Activated CD8-positive, alpha-beta T cell treated with anti-CD3 and anti-CD28 coated beads, Interleukin-2, amount 10 ng/mL, durations not matched to agents 7 days and 5 days (primary cell): ENCODE measurements at regions of chr15 and their contacts with region 1.

Region 1: GRCh38 chr15:81274931-81275707 is 48.8 kb downstream of the STARD5 start:
- DNase-seq: peak; percentile 86
- ATAC-seq: peak; percentile 96
- H3K4me3 Mint-ChIP-seq: no peak overlapping the region
- H3K27ac Mint-ChIP-seq: peak overlapping the region; percentile 60
- H3K4me1 Mint-ChIP-seq: peaks cover 32% of the 10 kb centered on the region
- H3K27me3 Mint-ChIP-seq: no peaks in the 10 kb centered on the region

Region 2: GRCh38 chr15:80977627-80978036 is 297.5 kb before region 1 on chr15:
- CTCF ChIA-PET with region 1: no interaction called
- POLR2A ChIA-PET with region 1: no interaction called
- DNase-seq: peak; percentile 48
- ATAC-seq: peak; percentile 55
- H3K4me3 Mint-ChIP-seq: no peak overlapping the region
- H3K27ac Mint-ChIP-seq: peak overlapping the region; percentile 33
- H3K4me1 Mint-ChIP-seq: peaks cover 43% of the 10 kb centered on the region
- H3K27me3 Mint-ChIP-seq: no peaks in the 10 kb centered on the region

Region 3: DNA sequence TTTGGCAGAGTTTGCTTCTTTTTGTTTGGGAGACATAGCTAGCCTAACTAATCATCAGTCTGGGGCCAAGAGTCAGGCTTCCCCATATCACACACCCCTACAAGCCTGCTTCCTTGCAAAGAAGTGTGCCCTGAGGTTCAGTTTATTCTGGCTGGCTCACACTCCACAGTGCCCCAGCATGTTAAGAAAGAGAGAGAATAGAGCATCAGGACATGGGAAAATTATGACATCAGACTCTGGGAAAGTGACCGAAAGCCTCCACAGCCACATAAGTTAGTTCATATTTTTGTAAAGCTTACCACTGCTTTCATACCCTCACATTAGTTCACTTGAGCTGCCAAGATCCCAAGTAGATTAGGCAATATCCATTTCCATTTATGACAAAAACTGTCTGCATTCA is 204.0 kb before region 1 on chr15:
- CTCF ChIA-PET with region 1: no interaction called
- POLR2A ChIA-PET with region 1: no interaction called
- DNase-seq: no peak
- ATAC-seq: no peak
- H3K4me3 Mint-ChIP-seq: no peak overlapping the region
- H3K27ac Mint-ChIP-seq: no peak overlapping the region
- H3K4me1 Mint-ChIP-seq: peaks cover 14% of the 10 kb centered on the region
- H3K27me3 Mint-ChIP-seq: no peaks in the 10 kb centered on the region

Region 4: DNA sequence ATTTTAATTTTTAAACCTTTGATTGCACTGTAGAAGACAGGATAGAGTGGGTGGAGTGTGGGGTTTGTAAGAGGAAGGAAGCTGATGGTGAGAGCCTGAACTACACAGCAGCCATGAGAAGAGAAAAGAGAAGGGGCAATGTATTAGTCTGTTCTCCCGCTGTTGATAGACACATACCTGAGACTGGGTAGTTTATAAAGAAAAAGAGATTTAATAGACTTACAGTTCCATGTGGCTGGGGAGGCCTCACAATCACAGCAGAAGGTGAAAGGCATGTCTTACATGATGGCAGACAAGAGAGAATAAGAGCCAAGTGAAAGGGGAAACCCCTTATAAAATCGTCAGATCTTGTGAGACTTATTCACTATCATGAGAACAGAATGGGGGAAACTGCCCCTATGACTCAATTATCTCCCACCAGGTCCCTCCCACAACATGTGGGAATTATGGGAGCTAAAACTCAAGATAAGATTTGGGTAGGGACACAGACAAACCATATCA is 11.6 kb after region 1 on chr15:
- CTCF ChIA-PET with region 1: interaction called, 243 read pairs
- POLR2A ChIA-PET with region 1: interaction called, 16 read pairs
- DNase-seq: no peak
- ATAC-seq: peak; percentile 77
- H3K4me3 Mint-ChIP-seq: peak overlapping the region; percentile 63
- H3K27ac Mint-ChIP-seq: peak overlapping the region; percentile 89
- H3K4me1 Mint-ChIP-seq: peaks cover 65% of the 10 kb centered on the region
- H3K27me3 Mint-ChIP-seq: no peaks in the 10 kb centered on the region

Region 5: DNA sequence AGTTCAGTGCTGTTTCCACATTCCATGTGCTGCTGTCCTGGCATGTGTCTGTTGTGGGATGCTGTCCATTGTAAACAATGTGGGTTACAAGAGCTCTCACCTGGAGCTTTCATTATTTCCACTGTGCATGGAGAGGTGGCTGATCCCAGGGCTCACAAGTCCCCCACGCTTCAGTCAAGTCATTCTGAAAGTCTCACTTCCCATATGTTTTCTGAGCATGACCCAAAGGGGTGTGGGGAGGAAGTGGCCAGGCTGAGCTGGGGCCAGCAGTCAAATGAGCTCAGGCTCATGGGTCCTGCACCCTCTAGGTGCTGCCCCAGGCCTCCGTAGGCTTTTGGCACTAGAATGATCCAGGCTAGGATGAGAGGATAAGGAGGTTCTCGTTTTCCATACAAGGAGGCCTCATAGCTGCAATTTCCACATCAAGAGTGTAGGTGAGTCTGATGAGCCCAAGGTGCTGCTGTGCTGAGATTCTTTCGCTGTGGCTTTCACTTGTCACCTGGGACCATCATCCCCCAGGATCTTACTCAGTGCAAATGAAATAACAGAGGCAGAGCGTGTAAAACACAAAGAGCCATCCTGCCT is 26.8 kb after region 1 on chr15:
- CTCF ChIA-PET with region 1: interaction called, 243 read pairs
- POLR2A ChIA-PET with region 1: interaction called, 21 read pairs
- DNase-seq: peak; percentile 66
- ATAC-seq: peak; percentile 42
- H3K4me3 Mint-ChIP-seq: peak overlapping the region; percentile 99
- H3K27ac Mint-ChIP-seq: peak overlapping the region; percentile 93
- H3K4me1 Mint-ChIP-seq: peaks cover 51% of the 10 kb centered on the region
- H3K27me3 Mint-ChIP-seq: no peaks in the 10 kb centered on the region

Region 6: DNA sequence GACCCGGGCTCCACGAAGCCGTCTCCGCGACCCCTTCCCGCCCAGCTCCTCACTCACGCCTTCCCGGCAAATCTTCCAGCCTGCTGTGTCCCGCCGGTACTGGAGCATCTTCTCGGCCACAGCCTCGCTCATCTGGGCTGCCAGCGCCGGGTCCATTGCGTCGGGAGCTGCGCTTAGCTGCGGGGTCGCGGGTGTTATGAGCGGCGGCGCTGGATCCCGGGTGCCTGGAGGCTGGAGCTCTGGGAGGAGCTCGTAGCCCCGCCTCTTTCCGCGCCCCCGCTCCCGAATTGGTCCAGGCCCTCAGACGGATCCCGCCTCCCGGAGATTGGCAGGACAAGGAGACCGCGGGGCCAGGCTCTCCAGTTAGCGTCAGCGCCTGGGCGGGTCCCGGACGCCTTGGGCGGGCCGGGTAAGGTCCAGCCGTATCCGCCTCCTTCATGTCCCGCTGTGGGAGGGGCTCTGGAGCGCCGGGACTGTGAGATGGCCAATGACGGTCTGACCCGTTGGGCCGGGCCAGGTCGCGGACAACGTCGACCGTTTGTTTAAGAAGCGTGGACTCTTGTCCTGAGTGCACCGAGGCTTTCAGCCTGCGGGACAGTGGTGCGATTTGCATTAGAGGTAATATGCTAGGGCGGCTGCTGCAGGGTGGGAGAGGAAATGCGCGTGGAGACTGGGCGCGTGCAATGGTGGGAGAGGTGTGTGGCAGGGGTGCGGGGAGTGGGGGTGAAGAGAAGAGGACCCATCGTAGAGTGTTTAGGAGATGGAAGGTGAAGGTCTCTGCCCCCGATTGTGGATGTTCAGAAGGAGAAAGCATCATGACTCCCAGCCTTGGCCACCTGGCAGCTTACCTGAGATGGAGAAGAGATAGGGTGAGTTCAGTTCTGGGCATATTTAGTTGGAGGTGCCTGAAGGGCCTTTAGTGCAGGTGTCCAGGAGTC is 49.1 kb after region 1 on chr15 and contains the start of gene STARD5:
- CTCF ChIA-PET with region 1: interaction called, 11 read pairs
- POLR2A ChIA-PET with region 1: interaction called, 4 read pairs
- DNase-seq: peak; percentile 98
- ATAC-seq: peak; percentile 100
- H3K4me3 Mint-ChIP-seq: peak within 1 kb of the TSS; percentile 100
- H3K27ac Mint-ChIP-seq: peak within 1 kb of the TSS; percentile 94
- H3K4me1 Mint-ChIP-seq: peaks cover 39% of the 10 kb centered on the region
- H3K27me3 Mint-ChIP-seq: no peaks in the 10 kb centered on the region
- total RNA-seq, gene STARD5: 4.9 to 5.3 TPM

Region 7: GRCh38 chr15:81336568-81336967 is 61.4 kb after region 1 on chr15:
- CTCF ChIA-PET with region 1: interaction called, 73 read pairs
- POLR2A ChIA-PET with region 1: no interaction called
- DNase-seq: peak; percentile 43
- ATAC-seq: peak; percentile 63
- H3K4me3 Mint-ChIP-seq: no peak overlapping the region
- H3K27ac Mint-ChIP-seq: no peak overlapping the region
- H3K4me1 Mint-ChIP-seq: peaks cover 14% of the 10 kb centered on the region
- H3K27me3 Mint-ChIP-seq: peaks cover 3% of the 10 kb centered on the region

Region 8: GRCh38 chr15:81400640-81401236 is 125.6 kb after region 1 on chr15:
- CTCF ChIA-PET with region 1: interaction called, 97 read pairs
- POLR2A ChIA-PET with region 1: no interaction called
- DNase-seq: peak; percentile 31
- ATAC-seq: peak; percentile 39
- H3K4me3 Mint-ChIP-seq: no peak overlapping the region
- H3K27ac Mint-ChIP-seq: no peak overlapping the region
- H3K4me1 Mint-ChIP-seq: no peaks in the 10 kb centered on the region
- H3K27me3 Mint-ChIP-seq: no peaks in the 10 kb centered on the region